H1 (cell line): ENCODE measurements at regions of chr10 and their contacts with region 1.

Region 1: GRCh38 chr10:103244663-103245271 is 920 bp upstream of the RPEL1 start:
- DNase-seq: peak; percentile 61 to 88
- H3K4me3 ChIP-seq: no peak overlapping the region
- H3K27ac ChIP-seq: no peak overlapping the region
- H3K4me1 ChIP-seq: peaks cover 2 to 8% (median 6%) of the 10 kb centered on the region in 4 experiments; a peak in 5 of 7 replicates
- H3K27me3 ChIP-seq: no peaks in the 10 kb centered on the region
- CTCF ChIP-seq: peak; percentile 84 to 99 (median 89)
- EP300 ChIP-seq: no peak
- POLR2A ChIP-seq: no peak
- RAD21 ChIP-seq: peak; percentile 98 to 100

Region 2: GRCh38 chr10:102917962-102918816 is 326.6 kb before region 1 on chr10 and contains the start of gene CNNM2:
- CTCF ChIA-PET with region 1: interaction called, 10 read pairs
- POLR2A ChIA-PET with region 1: no interaction called
- DNase-seq: peak; percentile 98 to 100
- H3K4me3 ChIP-seq: peak within 1 kb of the TSS; percentile 89 to 96 (median 92)
- H3K27ac ChIP-seq: peak within 1 kb of the TSS; percentile 93
- H3K4me1 ChIP-seq: peaks cover 3 to 10% (median 7%) of the 10 kb centered on the region in 4 experiments; a peak in 6 of 7 replicates
- H3K27me3 ChIP-seq: peaks cover 0 to 12% (median 11%) of the 10 kb centered on the region in 4 experiments; a peak in 5 of 7 replicates
- CTCF ChIP-seq: no peak
- EP300 ChIP-seq: no peak
- POLR2A ChIP-seq: peak in 1 of 2 experiments; percentile 59; a peak in 2 of 3 replicates
- RAD21 ChIP-seq: no peak
- total RNA-seq, gene CNNM2: 20.3 and 23.6 TPM in 2 replicates

Region 3: DNA sequence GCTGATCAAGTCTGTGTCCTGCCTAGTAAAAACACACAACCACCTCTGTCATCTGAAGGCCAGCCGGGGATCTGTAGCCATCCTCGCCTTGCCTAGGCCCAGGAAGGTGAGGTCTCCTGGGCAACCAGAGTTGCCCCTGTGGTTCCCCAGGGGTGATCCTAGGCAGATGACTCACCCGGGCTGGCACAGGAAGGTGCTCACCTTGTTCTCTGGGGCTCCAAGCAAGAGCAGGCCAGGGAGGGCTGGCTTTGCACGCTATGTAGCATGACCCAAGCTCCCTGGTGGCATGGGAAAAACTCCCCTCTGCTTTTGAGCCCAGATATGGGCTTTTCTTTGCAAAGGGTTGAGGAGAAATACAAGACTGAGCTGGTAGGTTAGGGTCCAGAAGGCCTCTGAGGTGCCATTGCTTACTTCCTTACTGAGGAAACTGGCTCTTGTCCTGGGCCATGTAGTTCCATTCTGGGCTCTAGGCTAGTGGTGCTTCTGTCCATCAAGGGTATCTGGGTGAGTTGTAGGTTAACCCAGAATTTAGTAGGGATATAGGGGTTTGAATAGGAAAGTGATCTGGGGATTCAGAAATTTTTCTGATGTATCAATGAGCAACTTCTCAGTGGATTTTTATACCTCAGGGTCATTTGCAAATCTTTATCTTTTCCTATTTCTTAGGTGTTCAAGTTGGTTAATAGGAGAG is 163.7 kb before region 1 on chr10:
- CTCF ChIA-PET with region 1: interaction called, 24 read pairs
- POLR2A ChIA-PET with region 1: interaction called, 3 read pairs
- DNase-seq: no peak
- H3K4me3 ChIP-seq: no peak overlapping the region
- H3K27ac ChIP-seq: no peak overlapping the region
- H3K4me1 ChIP-seq: no peaks in the 10 kb centered on the region
- H3K27me3 ChIP-seq: no peaks in the 10 kb centered on the region
- CTCF ChIP-seq: no peak
- EP300 ChIP-seq: no peak
- POLR2A ChIP-seq: no peak
- RAD21 ChIP-seq: no peak

Region 4: GRCh38 chr10:103096153-103096552 is 148.6 kb before region 1 on chr10:
- CTCF ChIA-PET with region 1: interaction called, 30 read pairs
- POLR2A ChIA-PET with region 1: no interaction called
- DNase-seq: no peak
- H3K4me3 ChIP-seq: no peak overlapping the region
- H3K27ac ChIP-seq: no peak overlapping the region
- H3K4me1 ChIP-seq: no peaks in the 10 kb centered on the region
- H3K27me3 ChIP-seq: no peaks in the 10 kb centered on the region
- CTCF ChIP-seq: no peak
- EP300 ChIP-seq: no peak
- POLR2A ChIP-seq: no peak
- RAD21 ChIP-seq: no peak

Region 5: DNA sequence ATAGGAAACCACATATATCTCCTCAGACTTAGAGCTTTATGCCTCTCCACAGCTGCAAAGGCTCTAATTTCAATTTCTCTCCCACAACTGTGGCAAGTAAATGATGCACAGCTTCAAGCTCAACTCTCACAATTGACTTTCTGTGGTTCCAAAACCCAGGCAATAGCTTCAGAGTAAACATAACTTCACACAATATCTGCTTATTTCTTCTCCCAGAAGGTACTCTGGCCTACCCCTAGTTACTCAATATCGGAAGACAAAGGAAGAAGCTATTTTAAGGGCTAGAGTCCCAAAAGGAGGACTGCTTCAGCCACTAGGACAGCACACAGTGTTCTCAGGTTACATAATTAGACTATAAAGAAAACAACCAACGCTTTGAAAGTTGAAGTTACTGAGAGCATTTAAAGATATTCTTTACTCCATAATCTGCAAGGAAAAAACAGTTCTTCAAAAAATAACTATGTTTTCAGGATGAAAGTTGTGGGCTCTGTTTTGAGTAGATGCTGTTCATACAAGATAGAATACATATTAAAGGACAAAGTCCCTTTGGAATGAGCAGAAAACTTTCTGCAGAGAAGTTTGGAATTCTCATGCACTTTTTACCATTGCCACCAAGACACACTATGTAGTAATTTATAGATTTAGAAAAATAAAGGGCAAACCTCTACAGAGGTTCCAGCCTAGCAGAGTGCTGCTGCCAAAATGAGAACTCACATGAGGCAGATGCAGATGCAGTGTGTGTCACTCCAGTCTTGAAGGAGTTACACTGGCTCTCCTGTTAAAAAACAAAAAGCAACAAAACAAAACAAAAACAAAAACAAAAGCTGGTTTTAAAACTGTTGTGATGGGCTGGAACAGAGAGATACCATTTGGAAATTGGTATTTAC is 133.5 kb before region 1 on chr10:
- CTCF ChIA-PET with region 1: interaction called, 14 read pairs
- POLR2A ChIA-PET with region 1: no interaction called
- DNase-seq: no peak
- H3K4me3 ChIP-seq: no peak overlapping the region
- H3K27ac ChIP-seq: no peak overlapping the region
- H3K4me1 ChIP-seq: peaks cover 0 to 5% (median 0%) of the 10 kb centered on the region in 4 experiments; a peak in 1 of 7 replicates
- H3K27me3 ChIP-seq: no peaks in the 10 kb centered on the region
- CTCF ChIP-seq: no peak
- EP300 ChIP-seq: no peak
- POLR2A ChIP-seq: no peak
- RAD21 ChIP-seq: no peak

Region 6: GRCh38 chr10:103192451-103193106 is 52.2 kb before region 1 on chr10:
- CTCF ChIA-PET with region 1: interaction called, 29 read pairs
- POLR2A ChIA-PET with region 1: interaction called, 15 read pairs
- DNase-seq: peak in 1 of 2 experiments; percentile 77
- H3K4me3 ChIP-seq: peak overlapping the region; percentile 86 to 90 (median 88)
- H3K27ac ChIP-seq: peak overlapping the region; percentile 76
- H3K4me1 ChIP-seq: peaks cover 4 to 9% (median 7%) of the 10 kb centered on the region in 4 experiments; a peak in 6 of 7 replicates
- H3K27me3 ChIP-seq: peaks cover 0 to 6% (median 1%) of the 10 kb centered on the region in 4 experiments; a peak in 4 of 7 replicates
- CTCF ChIP-seq: no peak
- EP300 ChIP-seq: no peak
- POLR2A ChIP-seq: no peak
- RAD21 ChIP-seq: no peak

Region 7: DNA sequence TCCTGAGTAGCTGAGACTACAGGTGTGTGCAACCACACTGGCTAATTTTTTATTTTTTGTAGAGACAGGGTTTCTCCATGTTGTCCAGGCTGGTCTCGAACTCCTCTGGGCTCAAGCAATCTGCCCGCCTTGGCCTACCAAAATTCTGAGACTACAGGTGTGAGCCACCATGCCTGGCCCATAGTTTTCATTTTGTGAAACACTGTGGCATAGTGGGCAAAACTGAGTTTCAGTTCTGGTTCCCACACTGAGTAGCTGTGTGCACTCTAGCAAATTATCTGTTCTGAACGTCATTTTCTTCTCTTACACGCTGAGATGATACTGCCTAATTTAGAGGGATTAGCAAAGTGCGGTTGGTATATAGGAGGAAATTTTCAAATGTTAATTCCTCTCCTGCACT is 138.0 kb after region 1 on chr10:
- CTCF ChIA-PET with region 1: no interaction called
- POLR2A ChIA-PET with region 1: no interaction called
- DNase-seq: no peak
- H3K4me3 ChIP-seq: no peak overlapping the region
- H3K27ac ChIP-seq: no peak overlapping the region
- H3K4me1 ChIP-seq: no peaks in the 10 kb centered on the region
- H3K27me3 ChIP-seq: no peaks in the 10 kb centered on the region
- CTCF ChIP-seq: no peak
- EP300 ChIP-seq: no peak
- POLR2A ChIP-seq: no peak
- RAD21 ChIP-seq: no peak